GM12878 (cell line): ENCODE measurements at regions of chr20 and their contacts with region 1.

Region 1: DNA sequence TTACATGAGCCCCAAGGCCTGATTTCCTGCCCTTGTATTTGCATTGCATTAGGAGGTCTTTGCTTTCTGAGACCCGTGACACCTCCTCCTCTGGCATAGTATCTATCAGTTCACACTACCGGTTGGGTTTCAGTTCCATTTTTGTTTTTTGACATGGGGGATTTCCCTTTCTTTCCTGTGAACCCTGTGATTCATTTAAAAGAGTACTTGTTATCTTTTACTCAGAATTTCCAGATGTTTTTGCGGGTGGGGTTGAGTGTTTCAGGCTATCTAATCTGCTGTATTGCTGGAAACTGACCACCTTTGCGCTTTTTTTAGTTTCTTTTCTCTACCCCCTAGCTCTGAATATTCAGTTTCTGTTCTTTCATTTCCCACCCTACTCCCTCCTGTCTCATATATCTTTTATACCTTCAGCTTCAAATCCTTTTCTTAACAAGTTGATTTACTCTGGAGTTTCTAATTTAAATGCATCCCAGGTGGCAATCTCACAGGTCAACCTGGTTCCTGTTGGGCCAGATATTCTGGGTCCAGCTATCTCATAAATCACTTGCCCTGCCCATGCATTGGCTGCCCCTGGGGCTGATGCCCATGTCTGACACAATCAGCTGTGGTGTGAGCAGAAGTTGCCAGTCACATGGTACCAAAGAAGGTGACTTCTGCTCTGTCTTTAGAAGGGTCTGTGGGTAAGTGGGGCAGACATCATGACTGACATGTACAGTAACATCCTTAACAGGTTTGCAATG is 14.3 kb upstream of the NCOA3 start:
- DNase-seq: peak; percentile 99
- ATAC-seq: peak; percentile 84
- H3K4me3 ChIP-seq: peak overlapping the region; percentile 43; the same call in 1 of the 2 replicates
- H3K27ac ChIP-seq: peak overlapping the region; percentile 98
- H3K4me1 ChIP-seq: peaks cover 56% of the 10 kb centered on the region
- H3K27me3 ChIP-seq: no peaks in the 10 kb centered on the region
- CTCF ChIP-seq: no peak
- EP300 ChIP-seq: peak; percentile 87 to 92
- POLR2A ChIP-seq: no peak
- RAD21 ChIP-seq: 0 out of 2 replicates have a peak, but pooled peaks have one; percentile 1

Region 2: GRCh38 chr20:47356526-47357295 is 130.6 kb before region 1 on chr20 and contains the start of gene ZMYND8:
- CTCF ChIA-PET with region 1: interaction called, 3 read pairs
- POLR2A ChIA-PET with region 1: interaction called, 5 read pairs
- RAD21 ChIA-PET with region 1: interaction called, 19 read pairs
- SMC1A ChIA-PET with region 1: interaction called, 9 read pairs
- in situ Hi-C with region 1: no loop called
- intact Hi-C with region 1: no loop called
- DNase-seq: peak; percentile 95
- ATAC-seq: peak; percentile 73
- H3K4me3 ChIP-seq: peak within 1 kb of the TSS; percentile 77
- H3K27ac ChIP-seq: peak within 1 kb of the TSS; percentile 99
- H3K4me1 ChIP-seq: peaks cover 46% of the 10 kb centered on the region
- H3K27me3 ChIP-seq: no peaks in the 10 kb centered on the region
- CTCF ChIP-seq: no peak
- EP300 ChIP-seq: no peak
- POLR2A ChIP-seq: no peak
- RAD21 ChIP-seq: no peak
- polyA plus RNA-seq, gene ZMYND8: 12.9 to 18.4 TPM

Region 3: DNA sequence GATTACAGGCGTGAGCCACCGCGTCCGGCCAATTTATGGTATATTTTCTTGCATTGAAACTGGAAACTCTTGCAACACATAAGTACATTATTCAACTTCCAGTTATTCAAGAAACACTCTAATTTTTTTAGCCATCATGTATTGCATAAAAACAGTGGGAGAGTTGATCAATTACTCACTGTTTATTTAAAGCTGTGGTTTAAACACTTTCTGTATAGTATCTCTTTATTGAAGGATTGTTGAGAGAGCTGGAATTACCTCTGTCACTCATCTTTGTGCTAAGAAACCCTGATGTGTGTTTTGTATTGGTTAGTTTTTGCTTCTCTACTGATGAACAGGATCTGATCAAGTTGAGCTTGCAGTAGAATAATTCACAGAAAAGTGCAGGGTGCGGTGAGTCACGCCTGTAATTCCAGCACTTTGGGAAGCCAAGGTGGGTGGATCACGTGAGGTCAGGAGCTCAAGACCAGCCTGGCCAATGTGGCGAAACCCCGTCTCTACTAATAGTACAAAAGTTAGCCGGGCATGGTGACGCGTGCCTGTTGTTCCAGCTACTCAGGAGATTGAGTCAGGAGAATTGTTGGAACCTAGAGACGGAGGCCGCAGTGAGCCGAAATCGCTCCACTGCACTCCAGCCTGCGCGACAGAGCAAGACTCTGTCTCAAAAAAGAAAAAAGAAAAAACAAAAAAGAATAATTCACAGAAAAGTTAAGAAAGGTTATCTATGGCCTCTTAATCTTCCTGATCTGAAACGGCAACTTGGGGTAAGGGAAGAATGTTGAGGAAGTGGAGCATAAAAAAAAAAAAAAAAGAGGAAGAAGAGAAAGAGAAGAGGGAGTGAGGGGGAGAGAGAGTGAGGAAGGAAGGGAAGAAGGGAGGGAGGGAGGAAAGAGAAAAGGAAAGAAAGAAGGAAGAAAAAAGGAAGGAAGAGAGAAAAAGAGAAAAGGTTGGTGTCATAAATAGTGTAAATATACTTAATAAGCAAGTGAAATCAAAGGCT is 54.8 kb before region 1 on chr20:
- CTCF ChIA-PET with region 1: interaction called, 3 read pairs
- POLR2A ChIA-PET with region 1: no interaction called
- RAD21 ChIA-PET with region 1: interaction called, 14 read pairs
- SMC1A ChIA-PET with region 1: interaction called, 11 read pairs
- in situ Hi-C with region 1: no loop called
- intact Hi-C with region 1: no loop called
- DNase-seq: no peak
- ATAC-seq: no peak
- H3K4me3 ChIP-seq: no peak overlapping the region
- H3K27ac ChIP-seq: no peak overlapping the region
- H3K4me1 ChIP-seq: peaks cover 27% of the 10 kb centered on the region
- H3K27me3 ChIP-seq: no peaks in the 10 kb centered on the region
- CTCF ChIP-seq: no peak
- EP300 ChIP-seq: no peak
- POLR2A ChIP-seq: no peak
- RAD21 ChIP-seq: no peak

Region 4: DNA sequence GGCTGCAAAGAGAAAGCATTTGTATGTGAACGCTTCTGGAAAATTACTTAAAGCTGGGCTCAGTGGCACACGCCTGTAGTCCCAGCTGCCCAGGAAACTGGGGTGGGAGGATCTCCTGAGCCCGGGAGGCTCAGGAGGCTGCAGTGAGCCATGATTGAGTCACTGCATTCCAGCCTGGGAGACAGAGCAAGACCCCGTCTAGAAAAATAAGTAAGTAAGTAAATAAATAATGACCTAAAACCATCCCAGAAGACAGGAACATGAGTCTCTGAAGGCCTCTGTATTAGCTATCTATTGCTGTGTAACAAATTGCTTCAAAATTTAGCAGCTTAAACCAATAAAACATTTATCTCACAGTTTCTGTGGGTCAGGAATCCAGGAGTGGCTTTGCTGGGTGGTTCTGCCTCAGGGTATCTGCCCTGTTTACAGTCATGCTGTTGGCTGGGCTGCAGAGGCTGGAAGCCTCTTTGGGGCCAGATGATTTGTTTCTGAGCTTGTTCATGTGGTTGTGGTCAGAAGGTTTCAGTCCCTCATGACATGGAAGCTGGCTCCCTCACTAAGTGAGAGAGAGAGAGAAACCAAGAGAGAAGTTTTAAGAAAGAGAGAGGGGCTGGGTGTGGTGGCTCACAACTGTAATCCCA is 34.1 kb before region 1 on chr20:
- CTCF ChIA-PET with region 1: interaction called, 4 read pairs
- POLR2A ChIA-PET with region 1: interaction called, 8 read pairs
- RAD21 ChIA-PET with region 1: interaction called, 14 read pairs
- SMC1A ChIA-PET with region 1: interaction called, 22 read pairs
- in situ Hi-C with region 1: no loop called
- intact Hi-C with region 1: no loop called
- DNase-seq: peak; percentile 92
- ATAC-seq: peak; percentile 98
- H3K4me3 ChIP-seq: peak overlapping the region; percentile 36; the same call in 1 of the 2 replicates
- H3K27ac ChIP-seq: peak overlapping the region; percentile 87
- H3K4me1 ChIP-seq: peaks cover 31% of the 10 kb centered on the region
- H3K27me3 ChIP-seq: no peaks in the 10 kb centered on the region
- CTCF ChIP-seq: no peak
- EP300 ChIP-seq: peak; percentile 27 to 28; a peak in 2 of 4 replicates
- POLR2A ChIP-seq: peak; percentile 27; the same call in 1 of the 2 replicates
- RAD21 ChIP-seq: 0 out of 2 replicates have a peak, but pooled peaks have one; percentile 14

Region 5: GRCh38 chr20:47475419-47476044 is 11.8 kb before region 1 on chr20:
- CTCF ChIA-PET with region 1: interaction called, 23 read pairs
- POLR2A ChIA-PET with region 1: interaction called, 78 read pairs
- RAD21 ChIA-PET with region 1: interaction called, 53 read pairs
- SMC1A ChIA-PET with region 1: interaction called, 134 read pairs
- in situ Hi-C with region 1: no loop called
- intact Hi-C with region 1: loop called (anchors 1 kb)
- DNase-seq: no peak
- ATAC-seq: no peak
- H3K4me3 ChIP-seq: no peak overlapping the region
- H3K27ac ChIP-seq: no peak overlapping the region
- H3K4me1 ChIP-seq: peaks cover 30% of the 10 kb centered on the region
- H3K27me3 ChIP-seq: no peaks in the 10 kb centered on the region
- CTCF ChIP-seq: no peak
- EP300 ChIP-seq: no peak
- POLR2A ChIP-seq: no peak
- RAD21 ChIP-seq: no peak

Region 6: GRCh38 chr20:47620808-47621805 is 133.8 kb after region 1 on chr20:
- CTCF ChIA-PET with region 1: interaction called, 11 read pairs
- POLR2A ChIA-PET with region 1: interaction called, 3 read pairs
- RAD21 ChIA-PET with region 1: interaction called, 6 read pairs
- SMC1A ChIA-PET with region 1: interaction called, 4 read pairs
- in situ Hi-C with region 1: no loop called
- intact Hi-C with region 1: no loop called
- DNase-seq: peak; percentile 32
- ATAC-seq: peak; percentile 79
- H3K4me3 ChIP-seq: no peak overlapping the region
- H3K27ac ChIP-seq: peak overlapping the region; percentile 33
- H3K4me1 ChIP-seq: peaks cover 10% of the 10 kb centered on the region
- H3K27me3 ChIP-seq: no peaks in the 10 kb centered on the region
- CTCF ChIP-seq: peak; percentile 59 to 68 (median 60)
- EP300 ChIP-seq: no peak
- POLR2A ChIP-seq: no peak
- RAD21 ChIP-seq: peak; percentile 89

Region 7: GRCh38 chr20:47635256-47635655 is 147.9 kb after region 1 on chr20:
- CTCF ChIA-PET with region 1: no interaction called
- POLR2A ChIA-PET with region 1: no interaction called
- RAD21 ChIA-PET with region 1: no interaction called
- SMC1A ChIA-PET with region 1: no interaction called
- in situ Hi-C with region 1: no loop called
- intact Hi-C with region 1: no loop called
- DNase-seq: no peak
- ATAC-seq: no peak
- H3K4me3 ChIP-seq: no peak overlapping the region
- H3K27ac ChIP-seq: no peak overlapping the region
- H3K4me1 ChIP-seq: no peaks in the 10 kb centered on the region
- H3K27me3 ChIP-seq: no peaks in the 10 kb centered on the region
- CTCF ChIP-seq: no peak
- EP300 ChIP-seq: no peak
- POLR2A ChIP-seq: no peak
- RAD21 ChIP-seq: no peak